CD8-positive, alpha-beta T cell (primary cell): ENCODE measurements at regions of chr3 and their contacts with region 1.

Region 1: GRCh38 chr3:114056130-114057010 is at the starts of genes CCDC191 and QTRT2:
- DNase-seq: peak; percentile 94 to 100 (median 98)
- ATAC-seq: peak; percentile 95
- H3K4me3 ChIP-seq: peak within 1 kb of the TSS; percentile 70 to 96
- H3K4me3 Mint-ChIP-seq: peak within 1 kb of the TSS; percentile 94
- H3K27ac ChIP-seq: peak within 1 kb of the TSS; percentile 84 to 97
- H3K27ac Mint-ChIP-seq: peak within 1 kb of the TSS; percentile 98
- H3K4me1 ChIP-seq: peaks cover 20% of the 10 kb centered on the region
- H3K4me1 Mint-ChIP-seq: peaks cover 53% of the 10 kb centered on the region
- H3K27me3 ChIP-seq: no peaks in the 10 kb centered on the region
- H3K27me3 Mint-ChIP-seq: no peaks in the 10 kb centered on the region
- CTCF ChIP-seq: no peak
- total RNA-seq, gene CCDC191: 2.8 to 2.9 TPM
- total RNA-seq, gene QTRT2: 31.7 to 36.6 TPM

Region 2: GRCh38 chr3:113523241-113523640 is 533.1 kb before region 1 on chr3:
- CTCF ChIA-PET with region 1: no interaction called
- POLR2A ChIA-PET with region 1: no interaction called
- intact Hi-C with region 1: loop called in 1 of 2 experiments (anchors 10 kb)
- DNase-seq: no peak
- ATAC-seq: no peak
- H3K4me3 ChIP-seq: no peak overlapping the region
- H3K4me3 Mint-ChIP-seq: no peak overlapping the region
- H3K27ac ChIP-seq: no peak overlapping the region
- H3K27ac Mint-ChIP-seq: no peak overlapping the region
- H3K4me1 ChIP-seq: no peaks in the 10 kb centered on the region
- H3K4me1 Mint-ChIP-seq: no peaks in the 10 kb centered on the region
- H3K27me3 ChIP-seq: no peaks in the 10 kb centered on the region
- H3K27me3 Mint-ChIP-seq: peaks cover 3% of the 10 kb centered on the region
- CTCF ChIP-seq: no peak

Region 3: DNA sequence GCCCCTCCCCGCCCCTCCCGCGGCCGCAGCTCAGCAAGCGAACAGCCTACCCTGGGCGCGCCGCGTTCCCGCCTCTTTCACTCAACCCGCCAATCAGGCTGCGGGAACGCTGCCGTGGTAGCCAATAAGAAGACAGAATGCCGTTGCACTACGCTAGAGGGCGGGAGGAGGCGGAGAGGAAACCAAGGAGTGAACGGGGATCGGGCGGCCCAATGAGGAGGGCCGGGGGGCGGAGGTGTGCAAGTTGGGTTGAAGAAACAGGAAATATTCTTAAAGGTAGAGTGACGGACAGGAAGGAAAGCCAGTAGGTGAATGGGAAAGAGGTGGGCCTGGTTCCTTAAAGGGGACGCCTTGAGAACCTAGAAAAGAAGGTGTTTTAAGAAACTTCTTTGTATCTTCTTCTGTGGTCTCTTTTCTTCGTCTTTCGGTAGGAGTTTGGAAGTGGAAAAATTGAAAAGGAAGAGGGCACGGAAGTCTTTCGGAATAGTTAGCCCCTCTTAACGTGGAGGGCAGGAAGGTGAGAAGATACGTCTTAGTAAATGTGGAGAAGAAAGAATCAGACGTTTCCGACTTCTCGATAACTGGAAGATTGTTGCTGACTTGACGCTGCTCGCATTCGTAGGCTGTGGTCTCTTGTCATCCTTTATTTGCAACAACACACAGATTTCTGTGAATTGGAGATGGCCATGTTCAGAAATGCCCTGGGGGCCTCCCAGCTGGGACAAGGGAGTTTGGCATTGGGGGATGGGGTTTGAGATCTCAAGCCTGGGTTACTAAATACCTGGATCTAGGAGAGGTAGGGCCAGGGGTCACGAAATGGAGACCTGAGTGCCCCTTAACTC is 359.5 kb before region 1 on chr3:
- CTCF ChIA-PET with region 1: no interaction called
- POLR2A ChIA-PET with region 1: no interaction called
- intact Hi-C with region 1: loop called (anchors 1 to 2 kb)
- DNase-seq: peak; percentile 96 to 100 (median 99)
- ATAC-seq: peak; percentile 84
- H3K4me3 ChIP-seq: peak overlapping the region; percentile 69 to 86
- H3K4me3 Mint-ChIP-seq: no peak overlapping the region
- H3K27ac ChIP-seq: peak overlapping the region; percentile 88 to 89
- H3K27ac Mint-ChIP-seq: no peak overlapping the region
- H3K4me1 ChIP-seq: peaks cover 32% of the 10 kb centered on the region
- H3K4me1 Mint-ChIP-seq: peaks cover 28% of the 10 kb centered on the region
- H3K27me3 ChIP-seq: no peaks in the 10 kb centered on the region
- H3K27me3 Mint-ChIP-seq: no peaks in the 10 kb centered on the region
- CTCF ChIP-seq: no peak

Region 4: GRCh38 chr3:113838631-113839209 is 217.7 kb before region 1 on chr3 and contains the start of gene GRAMD1C:
- CTCF ChIA-PET with region 1: no interaction called
- POLR2A ChIA-PET with region 1: no interaction called
- intact Hi-C with region 1: loop called (anchors 5 kb)
- DNase-seq: peak; percentile 65 to 93 (median 85)
- ATAC-seq: peak; percentile 99
- H3K4me3 ChIP-seq: peak within 1 kb of the TSS; percentile 47 to 53
- H3K4me3 Mint-ChIP-seq: peak within 1 kb of the TSS; percentile 80
- H3K27ac ChIP-seq: no peak within 1 kb of the TSS
- H3K27ac Mint-ChIP-seq: no peak within 1 kb of the TSS
- H3K4me1 ChIP-seq: no peaks in the 10 kb centered on the region
- H3K4me1 Mint-ChIP-seq: peaks cover 9% of the 10 kb centered on the region
- H3K27me3 ChIP-seq: no peaks in the 10 kb centered on the region
- H3K27me3 Mint-ChIP-seq: no peaks in the 10 kb centered on the region
- CTCF ChIP-seq: peak; percentile 81
- total RNA-seq, gene GRAMD1C: 0.65 to 1.00 TPM

Region 5: DNA sequence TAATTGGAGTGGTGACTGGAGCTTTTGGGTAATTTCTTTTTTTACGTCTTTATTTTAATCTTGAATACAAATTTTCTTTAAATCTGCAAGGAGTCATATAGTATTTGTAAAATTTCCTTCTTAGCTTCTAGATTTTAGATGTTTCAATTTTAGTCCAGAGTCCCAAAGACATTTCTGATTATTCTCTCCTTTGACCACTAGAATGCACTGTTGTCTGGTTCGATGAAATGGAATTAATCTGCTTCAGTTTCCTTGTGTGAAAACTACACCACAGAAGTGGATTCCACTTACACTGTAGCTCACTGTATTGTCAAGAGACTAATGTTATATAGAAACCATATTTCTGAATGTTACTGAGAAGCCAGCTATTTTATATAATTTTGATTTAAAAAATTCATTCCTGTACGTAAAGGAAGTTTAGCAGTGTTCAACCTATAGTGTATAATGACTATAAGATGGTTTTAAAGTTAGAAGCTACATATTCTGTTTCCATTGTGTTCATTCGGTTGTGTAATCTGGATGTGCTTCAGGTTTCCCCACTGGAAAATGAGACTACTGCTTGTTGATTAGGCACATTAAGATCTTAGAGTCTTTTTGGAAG is 211.6 kb before region 1 on chr3:
- CTCF ChIA-PET with region 1: no interaction called
- POLR2A ChIA-PET with region 1: no interaction called
- intact Hi-C with region 1: loop called (anchors 5 kb)
- DNase-seq: peak in 2 of 9 experiments; percentile 30 to 49
- ATAC-seq: no peak
- H3K4me3 ChIP-seq: no peak overlapping the region
- H3K4me3 Mint-ChIP-seq: no peak overlapping the region
- H3K27ac ChIP-seq: no peak overlapping the region
- H3K27ac Mint-ChIP-seq: no peak overlapping the region
- H3K4me1 ChIP-seq: no peaks in the 10 kb centered on the region
- H3K4me1 Mint-ChIP-seq: no peaks in the 10 kb centered on the region
- H3K27me3 ChIP-seq: no peaks in the 10 kb centered on the region
- H3K27me3 Mint-ChIP-seq: no peaks in the 10 kb centered on the region
- CTCF ChIP-seq: peak; percentile 60

Region 6: DNA sequence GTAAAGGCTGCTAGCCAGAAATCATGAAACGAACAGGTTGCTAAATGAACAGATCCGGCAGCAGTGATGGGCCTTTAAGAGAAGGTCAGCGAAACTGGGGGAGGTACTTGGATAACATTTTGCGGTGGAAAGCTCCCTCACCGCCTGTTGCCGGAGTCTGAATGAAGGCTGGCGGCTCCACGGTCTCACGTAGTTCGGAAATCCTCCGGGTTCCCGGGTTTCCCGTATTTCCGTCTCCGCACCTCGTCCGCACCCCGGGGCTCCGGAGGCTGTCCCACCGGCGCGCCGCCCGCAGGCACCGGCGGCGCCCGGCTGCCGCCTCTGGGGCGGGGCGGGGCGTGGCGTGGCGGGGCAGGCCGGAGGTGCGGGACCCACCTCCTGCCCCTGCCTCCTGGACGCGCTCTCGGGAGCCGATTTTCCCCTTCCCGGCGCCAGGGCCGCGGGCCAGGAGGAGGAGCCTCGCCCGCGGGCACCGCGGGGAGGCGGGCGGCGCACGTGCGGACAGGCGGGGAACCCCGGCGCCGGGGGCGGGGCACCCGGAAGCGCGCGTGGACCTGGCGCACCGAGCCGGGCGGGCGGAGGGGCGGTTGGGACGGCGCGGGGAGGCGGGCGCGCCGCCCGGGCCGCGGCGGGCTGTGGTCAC is 108.9 kb before region 1 on chr3 and contains the start of gene ZDHHC23:
- CTCF ChIA-PET with region 1: no interaction called
- POLR2A ChIA-PET with region 1: no interaction called
- intact Hi-C with region 1: loop called (anchors 1 to 2 kb)
- DNase-seq: peak; percentile 21 to 88 (median 63)
- ATAC-seq: peak; percentile 87
- H3K4me3 ChIP-seq: peak within 1 kb of the TSS; percentile 74 to 85
- H3K4me3 Mint-ChIP-seq: peak within 1 kb of the TSS; percentile 86
- H3K27ac ChIP-seq: no peak within 1 kb of the TSS
- H3K27ac Mint-ChIP-seq: peak within 1 kb of the TSS; percentile 84
- H3K4me1 ChIP-seq: peaks cover 8% of the 10 kb centered on the region
- H3K4me1 Mint-ChIP-seq: peaks cover 10% of the 10 kb centered on the region
- H3K27me3 ChIP-seq: no peaks in the 10 kb centered on the region
- H3K27me3 Mint-ChIP-seq: peaks cover 21% of the 10 kb centered on the region
- CTCF ChIP-seq: no peak
- total RNA-seq, gene ZDHHC23: 2.1 to 4.7 TPM

Region 7: DNA sequence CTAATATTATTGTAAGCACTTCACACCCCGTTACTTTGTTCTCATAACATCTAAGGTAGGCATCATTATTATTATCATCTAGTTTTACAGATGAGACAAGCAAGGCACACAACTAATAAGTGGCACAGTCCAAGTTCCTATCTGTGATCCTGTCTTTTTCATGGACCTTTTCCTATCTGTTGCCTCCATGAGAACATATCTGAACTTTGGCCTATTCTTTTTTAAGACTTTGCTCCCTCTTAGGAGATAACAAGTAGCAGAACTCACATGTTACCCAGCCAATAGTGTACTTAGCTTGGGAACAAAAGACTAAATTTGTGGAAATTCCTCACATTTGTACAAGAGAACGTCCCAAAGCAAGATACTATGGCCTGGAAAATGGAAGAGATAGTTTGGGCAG is 409.9 kb after region 1 on chr3:
- CTCF ChIA-PET with region 1: no interaction called
- POLR2A ChIA-PET with region 1: no interaction called
- intact Hi-C with region 1: no loop called
- DNase-seq: no peak
- ATAC-seq: no peak
- H3K4me3 ChIP-seq: no peak overlapping the region
- H3K4me3 Mint-ChIP-seq: no peak overlapping the region
- H3K27ac ChIP-seq: no peak overlapping the region
- H3K27ac Mint-ChIP-seq: no peak overlapping the region
- H3K4me1 ChIP-seq: no peaks in the 10 kb centered on the region
- H3K4me1 Mint-ChIP-seq: no peaks in the 10 kb centered on the region
- H3K27me3 ChIP-seq: no peaks in the 10 kb centered on the region
- H3K27me3 Mint-ChIP-seq: no peaks in the 10 kb centered on the region
- CTCF ChIP-seq: no peak